ENCODE measurements at regions of chr4 and their contacts with region 1.

Region 1: DNA sequence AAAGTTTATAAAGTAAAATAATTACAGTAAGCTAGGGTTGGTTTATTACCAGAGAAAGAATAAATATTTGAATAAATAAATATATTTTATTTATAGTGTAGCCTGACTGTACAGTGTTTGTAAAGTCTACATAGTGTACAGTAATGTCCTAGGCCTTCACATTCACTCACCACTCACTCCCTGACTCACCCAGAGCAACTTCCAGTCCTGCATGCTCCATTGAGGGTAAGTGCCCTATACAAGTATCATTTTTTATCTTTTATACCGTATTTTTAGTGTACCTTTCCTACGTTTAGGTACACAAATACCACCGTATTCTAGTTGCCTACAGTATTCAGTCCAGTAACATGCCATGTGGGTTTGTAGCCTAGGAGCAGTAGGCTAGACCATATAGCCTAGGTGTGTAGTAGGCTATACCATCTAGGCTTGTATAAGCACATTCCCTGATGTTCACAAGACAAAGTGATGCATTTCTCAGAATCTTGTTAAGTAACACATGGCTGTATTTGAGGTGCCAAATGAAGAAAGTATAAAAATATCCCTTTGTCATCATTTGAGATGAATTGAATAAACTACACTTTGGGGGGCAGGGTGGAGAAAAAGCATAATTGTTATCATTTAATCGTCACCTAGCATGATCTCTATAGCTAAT is 14.7 kb upstream of the KLHL8 start:
- DNase-seq: no peak
- ATAC-seq: no peak
- H3K4me3 ChIP-seq: peak overlapping the region; percentile 9 to 57 (median 54)
- H3K27ac ChIP-seq: peak overlapping the region in 1 of 10 donors; percentile 71
- H3K4me1 ChIP-seq: peaks cover 0 to 15% (median 7%) of the 10 kb centered on the region in 9 donors
- H3K27me3 ChIP-seq: no peaks in the 10 kb centered on the region
- CTCF ChIP-seq: no peak

Region 2: GRCh38 chr4:86497980-86498862 is 736.9 kb before region 1 on chr4:
- intact Hi-C with region 1: loop called in 2 of 10 experiments (anchors 10 kb)
- DNase-seq: peak in 1 of 2 donors; percentile 13
- ATAC-seq: peak; percentile 68 to 90 (median 84)
- H3K4me3 ChIP-seq: no peak overlapping the region
- H3K27ac ChIP-seq: peak overlapping the region in 2 of 10 donors; percentile 23 to 44
- H3K4me1 ChIP-seq: peaks cover 0 to 14% (median 6%) of the 10 kb centered on the region in 9 donors
- H3K27me3 ChIP-seq: peaks cover 0 to 5% (median 0%) of the 10 kb centered on the region in 7 donors
- CTCF ChIP-seq: peak; percentile 64 to 86 (median 78)

Region 3: GRCh38 chr4:86921608-86922252 is 313.4 kb before region 1 on chr4:
- intact Hi-C with region 1: loop called (anchors 2 to 10 kb)
- DNase-seq: no peak
- ATAC-seq: no peak
- H3K4me3 ChIP-seq: no peak overlapping the region
- H3K27ac ChIP-seq: no peak overlapping the region
- H3K4me1 ChIP-seq: peaks cover 0 to 31% (median 0%) of the 10 kb centered on the region in 9 donors
- H3K27me3 ChIP-seq: no peaks in the 10 kb centered on the region
- CTCF ChIP-seq: no peak

Region 4: GRCh38 chr4:86927843-86928395 is 307.2 kb before region 1 on chr4:
- intact Hi-C with region 1: loop called in 9 of 10 experiments (anchors 2 to 10 kb)
- DNase-seq: no peak
- ATAC-seq: peak in 5 of 8 donors; percentile 34 to 93 (median 56)
- H3K4me3 ChIP-seq: no peak overlapping the region
- H3K27ac ChIP-seq: peak overlapping the region in 1 of 10 donors; percentile 52
- H3K4me1 ChIP-seq: peaks cover 0 to 29% (median 0%) of the 10 kb centered on the region in 9 donors
- H3K27me3 ChIP-seq: no peaks in the 10 kb centered on the region
- CTCF ChIP-seq: no peak

Region 5: GRCh38 chr4:87150498-87151261 is 84.5 kb before region 1 on chr4:
- intact Hi-C with region 1: loop called in 9 of 10 experiments (anchors 1 to 5 kb)
- DNase-seq: peak in 1 of 2 donors; percentile 67
- ATAC-seq: peak; percentile 62 to 86 (median 72)
- H3K4me3 ChIP-seq: no peak overlapping the region
- H3K27ac ChIP-seq: no peak overlapping the region
- H3K4me1 ChIP-seq: no peaks in the 10 kb centered on the region
- H3K27me3 ChIP-seq: no peaks in the 10 kb centered on the region
- CTCF ChIP-seq: peak; percentile 70 to 96 (median 90)

Region 6: GRCh38 chr4:87390891-87391575 is 155.9 kb after region 1 on chr4 and contains the start of gene HSD17B11:
- intact Hi-C with region 1: no loop called
- DNase-seq: peak; percentile 82 to 92
- ATAC-seq: peak; percentile 99 to 100 (median 100)
- H3K4me3 ChIP-seq: peak within 1 kb of the TSS; percentile 56 to 79 (median 68)
- H3K27ac ChIP-seq: peak within 1 kb of the TSS; percentile 78 to 95 (median 89)
- H3K4me1 ChIP-seq: peaks cover 0 to 41% (median 25%) of the 10 kb centered on the region in 9 donors
- H3K27me3 ChIP-seq: no peaks in the 10 kb centered on the region
- CTCF ChIP-seq: peak in 4 of 9 donors; percentile 5 to 44 (median 35)
- total RNA-seq, gene HSD17B11: 4.6 to 24.1 (median 11.9) TPM

Measured in heart right ventricle (tissue), 16 donors.